ENCODE measurements at regions of chr12 and their contacts with region 1.

Region 1: DNA sequence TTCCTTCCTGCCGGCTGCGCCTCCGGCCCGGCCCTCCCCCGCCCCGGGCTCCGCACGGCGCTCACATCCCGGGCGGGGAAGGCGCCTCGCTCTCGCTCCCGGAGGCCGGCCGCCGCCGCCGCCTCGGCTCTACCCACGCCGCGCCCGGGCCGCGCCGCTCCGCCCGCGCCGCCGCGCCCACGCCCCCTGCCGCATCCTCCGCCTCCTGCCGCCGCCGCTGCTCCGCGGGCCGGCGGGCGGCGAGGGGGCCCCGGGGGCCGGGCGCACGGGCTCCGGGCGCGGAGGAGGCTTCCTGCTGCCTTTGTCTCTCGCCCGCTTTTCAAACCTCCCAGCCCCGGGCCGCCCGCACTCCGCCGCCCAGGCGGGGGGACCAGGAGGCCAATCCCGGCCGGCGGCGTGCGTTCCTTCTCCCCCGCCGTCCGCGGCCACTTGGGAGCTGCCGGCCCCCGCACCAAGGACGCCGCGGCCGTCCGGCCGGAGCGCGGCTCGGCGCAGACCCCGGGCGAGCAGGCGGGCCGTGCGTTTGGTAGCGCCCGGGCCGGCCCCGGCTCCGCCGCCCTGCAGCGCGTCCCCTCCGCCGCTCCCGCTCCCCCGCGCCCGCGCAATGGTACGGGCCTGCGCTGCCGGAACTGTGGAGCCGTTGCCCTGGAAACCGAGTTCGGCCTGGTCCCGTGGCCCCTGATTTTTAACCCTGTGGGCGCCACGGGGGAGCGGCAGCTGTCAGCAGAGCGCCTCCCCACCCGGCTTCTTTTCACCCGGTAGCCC is at the start of gene FBXL14:
- DNase-seq: peak; percentile 95
- ATAC-seq: peak; percentile 65
- H3K4me3 ChIP-seq: peak within 1 kb of the TSS; percentile 59 to 81 (median 73)
- H3K4me3 Mint-ChIP-seq: peak within 1 kb of the TSS; percentile 94
- H3K27ac ChIP-seq: peak within 1 kb of the TSS; percentile 80 to 96
- H3K27ac Mint-ChIP-seq: peak within 1 kb of the TSS; percentile 97
- H3K4me1 ChIP-seq: peaks cover 38 to 41% of the 10 kb centered on the region in 2 donors
- H3K4me1 Mint-ChIP-seq: peaks cover 50% of the 10 kb centered on the region
- H3K27me3 ChIP-seq: no peaks in the 10 kb centered on the region
- H3K27me3 Mint-ChIP-seq: no peaks in the 10 kb centered on the region
- CTCF ChIP-seq: no peak
- total RNA-seq, gene FBXL14: 33.9 and 37.3 TPM in 2 replicates

Region 2: GRCh38 chr12:401235-402028 is 1193.0 kb before region 1 on chr12 and contains the start of gene CCDC77:
- CTCF ChIA-PET with region 1: no interaction called
- POLR2A ChIA-PET with region 1: no interaction called
- intact Hi-C with region 1: loop called (anchors 5 kb)
- DNase-seq: peak; percentile 97
- ATAC-seq: peak; percentile 100
- H3K4me3 ChIP-seq: peak within 1 kb of the TSS; percentile 76 to 89 (median 82)
- H3K4me3 Mint-ChIP-seq: no peak within 1 kb of the TSS
- H3K27ac ChIP-seq: peak within 1 kb of the TSS; percentile 53 to 76
- H3K27ac Mint-ChIP-seq: no peak within 1 kb of the TSS
- H3K4me1 ChIP-seq: peaks cover 11 to 14% of the 10 kb centered on the region in 2 donors
- H3K4me1 Mint-ChIP-seq: no peaks in the 10 kb centered on the region
- H3K27me3 ChIP-seq: no peaks in the 10 kb centered on the region
- H3K27me3 Mint-ChIP-seq: no peaks in the 10 kb centered on the region
- CTCF ChIP-seq: peak; percentile 21
- total RNA-seq, gene CCDC77: 12.9 and 18.5 TPM in 2 replicates

Region 3: GRCh38 chr12:990661-991349 is 603.6 kb before region 1 on chr12 and contains the start of gene ERC1:
- CTCF ChIA-PET with region 1: no interaction called
- POLR2A ChIA-PET with region 1: no interaction called
- intact Hi-C with region 1: loop called (anchors 2 kb)
- DNase-seq: peak; percentile 93
- ATAC-seq: peak; percentile 87
- H3K4me3 ChIP-seq: peak within 1 kb of the TSS; percentile 60 to 97 (median 88)
- H3K4me3 Mint-ChIP-seq: peak within 1 kb of the TSS; percentile 98
- H3K27ac ChIP-seq: peak within 1 kb of the TSS; percentile 54 to 90
- H3K27ac Mint-ChIP-seq: peak within 1 kb of the TSS; percentile 97
- H3K4me1 ChIP-seq: peaks cover 16 to 18% of the 10 kb centered on the region in 2 donors
- H3K4me1 Mint-ChIP-seq: peaks cover 24% of the 10 kb centered on the region
- H3K27me3 ChIP-seq: no peaks in the 10 kb centered on the region
- H3K27me3 Mint-ChIP-seq: no peaks in the 10 kb centered on the region
- CTCF ChIP-seq: no peak
- total RNA-seq, gene ERC1: 77.6 and 90.0 TPM in 2 replicates

Region 4: GRCh38 chr12:1583421-1584078 is 10.9 kb before region 1 on chr12:
- CTCF ChIA-PET with region 1: interaction called, 24 read pairs
- POLR2A ChIA-PET with region 1: interaction called, 4 read pairs
- intact Hi-C with region 1: loop called (anchors 1 kb)
- DNase-seq: peak; percentile 86
- ATAC-seq: peak; percentile 93
- H3K4me3 ChIP-seq: peak overlapping the region in 2 of 5 experiments; percentile 12 to 28
- H3K4me3 Mint-ChIP-seq: peak overlapping the region; percentile 79
- H3K27ac ChIP-seq: no peak overlapping the region
- H3K27ac Mint-ChIP-seq: no peak overlapping the region
- H3K4me1 ChIP-seq: peaks cover 6 to 7% of the 10 kb centered on the region in 2 donors
- H3K4me1 Mint-ChIP-seq: peaks cover 19% of the 10 kb centered on the region
- H3K27me3 ChIP-seq: no peaks in the 10 kb centered on the region
- H3K27me3 Mint-ChIP-seq: no peaks in the 10 kb centered on the region
- CTCF ChIP-seq: peak; percentile 92